Activated T-helper 1 cell treated with anti-CD3 and anti-CD28 coated beads, Interleukin-12 subunit alpha, Interleukin-12 subunit beta, Interleukin-2, Interleukin-4 antibody, amounts not matched to agents 30 ng/mL and 10 ng/mL and 1 ng/mL, durations not matched to agents 14 hours and 24 hours and 36 hours (primary cell): ENCODE measurements at regions of chr3 and their contacts with region 1.

Region 1: GRCh38 chr3:60017631-60018030 is 967.8 kb upstream of the CFAP20DC start:
- DNase-seq: peak; percentile 66
- H3K4me3 Mint-ChIP-seq: peak overlapping the region; percentile 74
- H3K27ac Mint-ChIP-seq: peak overlapping the region; percentile 96
- H3K4me1 Mint-ChIP-seq: peaks cover 67% of the 10 kb centered on the region
- H3K27me3 Mint-ChIP-seq: peaks cover 2% of the 10 kb centered on the region

Region 2: DNA sequence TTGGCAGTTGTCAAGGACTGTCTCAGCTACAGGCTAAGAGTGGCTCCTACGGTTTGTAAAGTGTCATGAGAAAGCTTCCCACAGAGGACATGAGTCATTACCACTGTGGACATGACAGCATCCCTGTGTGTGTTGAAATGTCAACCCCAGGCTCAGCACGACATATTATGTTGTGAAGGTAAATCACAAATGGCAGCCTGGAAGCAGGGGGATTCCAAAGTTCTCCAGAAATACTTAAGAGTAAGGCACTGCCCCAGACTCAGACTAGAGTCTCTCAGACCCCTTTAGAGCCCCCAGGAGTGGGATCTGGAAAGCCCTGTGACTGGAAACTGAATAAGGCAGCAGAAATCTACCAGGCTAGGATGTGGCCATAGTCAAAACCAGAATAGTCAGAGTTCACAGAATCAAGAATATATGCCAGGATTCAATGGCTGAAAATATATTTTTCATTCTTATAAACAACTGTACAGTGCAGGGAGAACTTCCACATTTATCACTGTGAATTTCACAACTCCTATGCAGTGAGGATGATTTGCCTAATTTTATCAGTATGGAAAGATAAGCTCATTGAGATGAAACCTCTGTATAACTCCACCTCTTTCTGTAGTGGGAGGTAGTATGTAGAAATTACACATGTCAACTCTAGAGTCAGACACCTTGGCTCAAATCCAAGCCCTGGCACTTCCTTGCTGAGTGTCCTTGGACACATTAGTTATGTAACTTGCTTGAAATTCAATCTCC is 730.7 kb before region 1 on chr3:
- intact Hi-C with region 1: loop called (anchors 5 kb)
- DNase-seq: peak; percentile 29
- H3K4me3 Mint-ChIP-seq: peak overlapping the region; percentile 1
- H3K27ac Mint-ChIP-seq: peak overlapping the region; percentile 91
- H3K4me1 Mint-ChIP-seq: peaks cover 37% of the 10 kb centered on the region
- H3K27me3 Mint-ChIP-seq: no peaks in the 10 kb centered on the region

Region 3: DNA sequence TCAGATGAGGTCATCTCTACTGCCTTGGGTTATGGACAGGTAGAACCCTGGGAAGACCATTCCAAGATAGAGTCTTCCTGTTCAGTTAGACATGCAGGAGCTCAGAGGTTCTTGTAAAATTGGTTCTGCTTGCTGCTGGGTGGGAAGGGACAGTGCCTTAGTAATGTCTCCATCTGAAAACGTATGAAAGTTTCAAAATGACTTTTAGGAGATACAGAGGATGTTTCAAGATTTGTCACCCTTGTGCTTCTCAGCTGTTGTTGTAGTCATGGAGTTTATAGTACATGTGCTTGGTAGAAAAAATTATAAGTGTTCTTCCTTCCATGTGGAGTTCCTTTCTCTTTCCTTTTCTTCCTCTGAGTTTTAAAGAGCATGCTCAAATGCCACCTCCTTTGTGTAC is 82.6 kb before region 1 on chr3:
- intact Hi-C with region 1: loop called (anchors 1 kb)
- DNase-seq: peak; percentile 6
- H3K4me3 Mint-ChIP-seq: peak overlapping the region; percentile 54
- H3K27ac Mint-ChIP-seq: peak overlapping the region; percentile 82
- H3K4me1 Mint-ChIP-seq: peaks cover 43% of the 10 kb centered on the region
- H3K27me3 Mint-ChIP-seq: no peaks in the 10 kb centered on the region

Region 4: DNA sequence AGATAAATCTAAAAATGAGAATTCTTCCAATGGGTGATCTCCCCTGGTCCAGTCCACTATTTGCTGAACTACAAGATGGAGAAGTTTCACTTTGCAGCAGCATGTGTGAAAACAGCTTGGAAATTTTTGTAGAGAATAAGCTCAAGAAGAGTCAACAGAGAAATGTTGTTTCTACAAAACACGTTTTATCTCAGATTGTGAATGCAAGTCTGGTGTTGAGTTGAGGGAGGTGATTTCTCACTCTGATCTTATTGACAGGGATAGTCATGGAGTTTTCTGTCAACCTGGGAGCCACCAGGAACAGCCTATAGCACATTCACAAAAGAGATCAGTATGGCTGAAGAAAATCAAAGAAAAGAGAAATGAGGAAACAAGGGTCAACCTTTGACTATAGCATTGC is 13.4 kb after region 1 on chr3:
- intact Hi-C with region 1: loop called (anchors 1 kb)
- DNase-seq: no peak
- H3K4me3 Mint-ChIP-seq: no peak overlapping the region
- H3K27ac Mint-ChIP-seq: peak overlapping the region; percentile 70
- H3K4me1 Mint-ChIP-seq: peaks cover 43% of the 10 kb centered on the region
- H3K27me3 Mint-ChIP-seq: no peaks in the 10 kb centered on the region

Region 5: DNA sequence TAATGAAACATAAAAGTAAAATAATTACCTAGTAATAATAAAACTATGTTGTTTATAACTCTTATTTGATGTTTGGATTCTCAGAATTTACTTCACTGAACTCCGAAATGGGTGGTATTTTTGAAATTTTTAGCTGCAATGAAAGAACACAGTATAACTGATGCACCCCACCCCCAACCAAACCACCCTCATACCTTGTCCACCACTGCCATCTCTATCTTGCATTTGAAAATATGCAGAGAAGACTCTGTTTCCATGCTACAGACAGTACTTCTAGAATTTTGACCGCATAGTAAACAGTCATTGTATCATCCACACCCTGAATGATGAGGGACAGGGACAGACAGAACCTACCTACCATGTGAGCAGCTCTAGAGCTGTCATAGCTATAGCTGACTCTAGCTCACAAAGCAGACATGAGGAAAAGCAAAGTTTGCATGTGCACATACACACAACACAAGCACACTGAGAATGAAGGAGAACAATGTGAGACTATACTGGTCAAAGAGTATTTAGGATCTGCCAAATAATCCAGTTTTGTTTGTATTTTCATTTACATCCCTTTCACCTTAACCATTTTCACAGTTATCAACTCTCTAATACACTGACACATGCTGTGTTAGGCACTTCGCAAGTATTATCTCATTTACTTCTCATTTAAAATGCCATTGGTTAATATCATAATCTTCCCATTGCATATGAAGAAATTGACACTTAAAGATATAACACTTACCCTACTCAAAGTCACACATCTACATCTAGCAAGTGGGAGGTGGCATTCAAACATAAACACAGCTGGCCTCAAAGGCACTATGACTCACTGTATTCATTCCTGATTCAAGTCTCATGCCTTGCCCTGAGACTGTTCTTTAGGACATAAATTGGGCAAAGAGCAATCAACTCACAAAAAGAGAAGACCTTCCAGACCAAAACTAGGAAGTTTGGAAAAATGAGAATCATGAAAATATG is 46.9 kb after region 1 on chr3:
- intact Hi-C with region 1: loop called (anchors 1 kb)
- DNase-seq: no peak
- H3K4me3 Mint-ChIP-seq: peak overlapping the region; percentile 53
- H3K27ac Mint-ChIP-seq: peak overlapping the region; percentile 86
- H3K4me1 Mint-ChIP-seq: peaks cover 79% of the 10 kb centered on the region
- H3K27me3 Mint-ChIP-seq: no peaks in the 10 kb centered on the region

Region 6: DNA sequence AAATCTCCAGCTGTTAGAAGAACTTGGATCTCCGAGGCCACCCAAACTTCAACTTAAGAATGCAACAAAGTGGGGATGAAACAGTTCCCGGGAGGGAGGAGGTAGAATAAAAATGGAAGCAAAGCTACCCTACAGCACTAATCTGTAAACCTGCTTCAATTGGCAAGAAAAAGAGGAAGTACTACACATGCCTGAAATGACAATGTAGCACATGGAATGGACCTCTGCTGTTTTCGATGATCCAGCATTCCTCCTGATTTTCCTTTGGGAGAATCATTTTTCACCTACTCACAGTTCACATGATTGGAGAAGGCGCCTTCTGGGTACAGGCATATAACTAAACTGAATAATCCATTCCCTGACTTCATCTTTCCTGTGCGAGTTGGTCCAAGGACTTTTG is 152.1 kb after region 1 on chr3:
- intact Hi-C with region 1: no loop called
- DNase-seq: no peak
- H3K4me3 Mint-ChIP-seq: no peak overlapping the region
- H3K27ac Mint-ChIP-seq: no peak overlapping the region
- H3K4me1 Mint-ChIP-seq: peaks cover 10% of the 10 kb centered on the region
- H3K27me3 Mint-ChIP-seq: no peaks in the 10 kb centered on the region

Region 7: DNA sequence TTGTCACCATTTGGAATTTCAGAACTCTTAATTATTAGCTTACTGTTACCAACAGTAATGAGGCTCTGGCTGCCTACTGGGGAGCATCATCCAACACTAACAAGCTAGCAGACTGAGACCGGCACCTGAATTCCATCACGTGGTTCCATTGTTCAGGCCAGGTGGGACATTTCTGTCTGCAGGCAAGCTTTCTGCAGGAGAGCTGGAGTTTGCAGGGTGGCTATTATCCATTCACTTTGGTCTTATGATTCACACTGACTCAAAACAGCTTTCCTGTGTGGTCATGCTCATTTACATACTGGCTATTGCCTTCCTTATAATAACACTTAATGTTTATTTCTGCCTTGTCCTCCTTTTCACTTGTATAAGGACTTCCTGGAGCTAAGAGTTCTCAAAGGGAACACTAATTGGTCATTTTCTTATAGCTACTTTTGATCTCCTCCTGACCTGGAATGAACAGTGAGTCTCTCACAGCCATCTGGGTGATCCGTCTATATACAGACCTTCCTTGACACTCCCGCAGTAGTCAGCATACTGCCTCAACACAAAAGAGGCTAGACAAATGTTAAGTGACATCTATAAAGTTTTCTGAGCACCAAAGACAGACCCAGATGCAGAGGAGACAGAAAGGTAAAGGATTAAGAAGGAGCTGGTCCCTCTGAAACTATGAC is 538.2 kb after region 1 on chr3:
- intact Hi-C with region 1: loop called (anchors 2 kb)
- DNase-seq: no peak
- H3K4me3 Mint-ChIP-seq: no peak overlapping the region
- H3K27ac Mint-ChIP-seq: peak overlapping the region; percentile 0
- H3K4me1 Mint-ChIP-seq: peaks cover 38% of the 10 kb centered on the region
- H3K27me3 Mint-ChIP-seq: peaks cover 2% of the 10 kb centered on the region

Region 8: GRCh38 chr3:61172684-61173083 is 1155.1 kb after region 1 on chr3:
- intact Hi-C with region 1: no loop called
- DNase-seq: no peak
- H3K4me3 Mint-ChIP-seq: no peak overlapping the region
- H3K27ac Mint-ChIP-seq: no peak overlapping the region
- H3K4me1 Mint-ChIP-seq: no peaks in the 10 kb centered on the region
- H3K27me3 Mint-ChIP-seq: no peaks in the 10 kb centered on the region